Naive thymus-derived CD4-positive, alpha-beta T cell (primary cell): ENCODE measurements at regions of chrX and their contacts with region 1.

Region 1: DNA sequence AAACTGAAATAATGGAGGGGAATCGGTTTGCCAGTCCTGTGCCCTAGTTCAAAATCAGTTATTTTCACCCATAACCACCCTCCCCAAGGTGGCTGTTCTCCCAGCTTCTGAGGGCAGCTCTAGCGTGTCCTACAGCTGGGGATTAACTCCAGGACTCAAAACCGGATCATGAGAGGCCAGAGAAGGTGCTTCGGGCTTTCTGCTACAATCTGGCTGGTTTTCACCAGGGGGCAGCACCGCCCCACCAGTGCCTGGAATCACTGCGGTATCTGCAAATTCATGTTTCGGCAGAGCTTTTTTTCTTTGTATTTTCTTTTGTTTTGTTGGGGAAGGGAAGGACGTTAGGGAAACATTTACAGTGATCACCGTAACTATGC is 28.4 kb downstream of the PDHA1 start:
- DNase-seq: peak; percentile 33 to 66 (median 61)
- ATAC-seq: peak; percentile 89
- H3K4me3 ChIP-seq: peak overlapping the region; percentile 74
- H3K4me3 Mint-ChIP-seq: peak overlapping the region; percentile 78 to 94 (median 88)
- H3K27ac ChIP-seq: no peak overlapping the region
- H3K27ac Mint-ChIP-seq: peak overlapping the region in 8 of 9 donors; percentile 13 to 67 (median 38)
- H3K4me1 ChIP-seq: no peaks in the 10 kb centered on the region
- H3K4me1 Mint-ChIP-seq: peaks cover 4 to 8% (median 8%) of the 10 kb centered on the region in 7 donors
- H3K27me3 ChIP-seq: no peaks in the 10 kb centered on the region
- H3K27me3 Mint-ChIP-seq: no peaks in the 10 kb centered on the region

Region 2: GRCh38 chrX:19462231-19462630 is 90.1 kb after region 1 on chrX:
- CTCF ChIA-PET with region 1: no interaction called
- POLR2A ChIA-PET with region 1: no interaction called
- intact Hi-C with region 1: no loop called
- DNase-seq: no peak
- ATAC-seq: no peak
- H3K4me3 ChIP-seq: no peak overlapping the region
- H3K4me3 Mint-ChIP-seq: no peak overlapping the region
- H3K27ac ChIP-seq: no peak overlapping the region
- H3K27ac Mint-ChIP-seq: no peak overlapping the region
- H3K4me1 ChIP-seq: no peaks in the 10 kb centered on the region
- H3K4me1 Mint-ChIP-seq: peaks cover 0 to 2% (median 0%) of the 10 kb centered on the region in 7 donors
- H3K27me3 ChIP-seq: no peaks in the 10 kb centered on the region
- H3K27me3 Mint-ChIP-seq: peaks cover 0 to 5% (median 0%) of the 10 kb centered on the region in 5 donors

Region 3: DNA sequence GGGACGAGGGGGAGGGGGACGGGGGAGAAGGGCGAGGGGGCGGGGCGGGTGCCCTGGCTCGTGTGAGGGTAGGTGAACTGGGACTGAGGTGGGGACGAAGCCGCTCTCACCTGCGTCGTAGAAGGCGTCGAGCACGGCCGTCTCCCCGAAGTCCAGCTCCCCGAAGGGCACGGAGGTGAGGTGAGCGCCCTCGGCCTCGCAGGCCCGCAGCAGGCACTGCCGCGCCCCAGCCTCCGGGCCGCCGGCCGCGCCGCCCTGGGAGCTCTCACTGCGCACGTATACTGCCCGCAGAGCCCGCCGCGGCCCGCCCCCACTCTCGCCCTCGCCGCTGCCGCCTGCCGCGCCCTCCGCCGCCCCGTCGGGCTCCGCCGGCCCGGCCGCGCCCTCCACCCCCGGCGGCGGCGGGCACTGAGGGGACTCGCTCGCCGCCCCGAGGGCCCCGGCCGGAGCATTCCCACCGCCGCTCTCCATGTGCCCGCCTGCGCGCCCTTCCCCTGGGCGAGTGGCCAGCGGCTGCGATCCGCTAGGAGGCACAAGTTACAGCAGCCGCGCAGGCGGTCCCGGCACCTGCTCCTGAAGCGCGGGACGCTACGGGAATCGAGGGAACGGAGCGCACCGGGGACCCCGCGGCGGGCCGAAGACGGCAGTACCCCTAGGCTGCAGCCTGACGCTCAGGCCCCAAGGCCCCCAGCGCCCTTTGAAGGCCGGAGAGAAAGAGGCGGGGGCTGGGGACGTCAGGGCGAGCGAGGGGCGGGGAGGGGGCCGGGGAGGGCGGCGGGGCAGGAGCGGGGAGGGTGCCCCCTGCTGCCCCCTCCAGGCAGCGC is 142.8 kb after region 1 on chrX and contains the start of gene MAP3K15:
- CTCF ChIA-PET with region 1: no interaction called
- POLR2A ChIA-PET with region 1: no interaction called
- intact Hi-C with region 1: loop called (anchors 1 to 5 kb)
- DNase-seq: peak in 3 of 9 donors; percentile 7 to 33 (median 9)
- ATAC-seq: peak; percentile 57
- H3K4me3 ChIP-seq: no peak within 1 kb of the TSS
- H3K4me3 Mint-ChIP-seq: peak within 1 kb of the TSS; percentile 27 to 72 (median 59)
- H3K27ac ChIP-seq: no peak within 1 kb of the TSS
- H3K27ac Mint-ChIP-seq: no peak within 1 kb of the TSS
- H3K4me1 ChIP-seq: no peaks in the 10 kb centered on the region
- H3K4me1 Mint-ChIP-seq: peaks cover 0 to 7% (median 0%) of the 10 kb centered on the region in 7 donors
- H3K27me3 ChIP-seq: no peaks in the 10 kb centered on the region
- H3K27me3 Mint-ChIP-seq: peaks cover 4 to 37% (median 25%) of the 10 kb centered on the region in 5 donors
- total RNA-seq, gene MAP3K15: 0.10 TPM in 1 of 5 experiments, not detected in the others

Region 4: DNA sequence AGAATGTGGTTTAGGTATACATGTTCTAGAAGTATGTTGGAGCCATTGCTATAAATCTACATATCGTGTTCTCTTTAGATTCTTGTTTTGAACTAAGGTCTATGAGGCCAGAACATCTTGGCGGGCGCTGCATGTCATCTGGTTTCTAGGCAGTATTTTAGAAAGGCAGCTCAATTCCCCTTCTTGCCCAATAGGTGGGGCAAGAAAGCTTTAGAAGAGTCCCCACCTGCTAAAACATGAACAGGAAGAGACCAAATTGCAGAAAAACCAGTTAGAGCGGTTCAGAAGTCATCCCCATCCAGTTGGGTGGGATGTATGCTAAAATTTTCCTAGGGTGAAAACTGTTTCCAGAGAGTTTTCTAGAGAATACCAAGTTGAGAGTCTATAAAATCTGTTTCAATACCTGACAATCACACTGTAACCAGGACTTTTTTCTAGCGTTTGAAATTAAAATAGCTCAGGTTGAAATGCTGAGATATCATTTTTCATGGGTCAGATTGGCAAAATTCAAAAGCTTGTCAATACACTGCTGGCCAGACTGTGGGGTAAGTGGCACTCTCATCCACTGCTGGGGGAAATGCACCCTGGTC is 532.7 kb after region 1 on chrX:
- CTCF ChIA-PET with region 1: interaction called, 3 read pairs
- POLR2A ChIA-PET with region 1: no interaction called
- intact Hi-C with region 1: loop called in 1 of 2 experiments (anchors 1 kb)
- DNase-seq: peak in 6 of 9 donors; percentile 16 to 54 (median 42)
- ATAC-seq: peak; percentile 74
- H3K4me3 ChIP-seq: no peak overlapping the region
- H3K4me3 Mint-ChIP-seq: no peak overlapping the region
- H3K27ac ChIP-seq: no peak overlapping the region
- H3K27ac Mint-ChIP-seq: no peak overlapping the region
- H3K4me1 ChIP-seq: no peaks in the 10 kb centered on the region
- H3K4me1 Mint-ChIP-seq: peaks cover 0 to 17% (median 6%) of the 10 kb centered on the region in 7 donors
- H3K27me3 ChIP-seq: no peaks in the 10 kb centered on the region
- H3K27me3 Mint-ChIP-seq: no peaks in the 10 kb centered on the region

Region 5: DNA sequence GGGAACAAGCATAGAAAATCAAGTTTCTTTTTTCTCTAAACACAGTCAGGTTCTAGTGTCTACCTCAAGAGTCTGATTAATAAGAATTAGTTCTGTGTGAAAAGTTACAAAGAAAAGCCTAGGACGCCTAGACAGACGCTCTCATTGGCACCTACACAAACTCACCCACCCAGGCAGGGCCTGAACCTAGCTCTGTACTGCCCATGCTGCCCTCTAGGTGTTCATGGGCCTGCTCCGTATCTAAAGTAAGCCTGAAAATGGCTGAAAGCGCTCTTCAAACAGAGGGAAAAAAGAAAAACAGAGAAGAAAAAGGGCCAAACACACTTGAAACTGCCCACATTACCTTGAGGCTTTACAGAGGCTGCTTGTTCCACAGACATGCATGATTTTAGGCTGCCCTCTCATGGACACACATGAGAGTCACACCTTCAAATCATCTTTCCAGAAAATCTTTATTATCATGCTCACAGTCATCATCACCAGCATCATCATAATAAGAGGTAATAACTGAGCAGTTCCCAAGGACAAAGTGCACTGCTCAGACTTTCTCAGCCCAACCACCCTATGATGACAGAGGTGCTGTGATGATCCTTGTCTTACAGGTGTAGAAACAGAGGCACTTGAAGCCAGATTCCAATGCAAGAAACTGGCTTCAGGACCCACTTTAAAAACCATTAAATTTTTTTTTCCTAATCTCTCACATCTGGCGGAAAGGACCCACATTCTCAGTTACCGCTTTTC is 695.0 kb after region 1 on chrX:
- CTCF ChIA-PET with region 1: interaction called, 5 read pairs
- POLR2A ChIA-PET with region 1: no interaction called
- intact Hi-C with region 1: loop called (anchors 1 kb)
- DNase-seq: peak in 6 of 9 donors; percentile 8 to 40 (median 28)
- ATAC-seq: peak; percentile 69
- H3K4me3 ChIP-seq: no peak overlapping the region
- H3K4me3 Mint-ChIP-seq: no peak overlapping the region
- H3K27ac ChIP-seq: no peak overlapping the region
- H3K27ac Mint-ChIP-seq: peak overlapping the region in 1 of 9 donors; percentile 62
- H3K4me1 ChIP-seq: no peaks in the 10 kb centered on the region
- H3K4me1 Mint-ChIP-seq: peaks cover 0 to 3% (median 0%) of the 10 kb centered on the region in 7 donors
- H3K27me3 ChIP-seq: no peaks in the 10 kb centered on the region
- H3K27me3 Mint-ChIP-seq: no peaks in the 10 kb centered on the region

Region 6: DNA sequence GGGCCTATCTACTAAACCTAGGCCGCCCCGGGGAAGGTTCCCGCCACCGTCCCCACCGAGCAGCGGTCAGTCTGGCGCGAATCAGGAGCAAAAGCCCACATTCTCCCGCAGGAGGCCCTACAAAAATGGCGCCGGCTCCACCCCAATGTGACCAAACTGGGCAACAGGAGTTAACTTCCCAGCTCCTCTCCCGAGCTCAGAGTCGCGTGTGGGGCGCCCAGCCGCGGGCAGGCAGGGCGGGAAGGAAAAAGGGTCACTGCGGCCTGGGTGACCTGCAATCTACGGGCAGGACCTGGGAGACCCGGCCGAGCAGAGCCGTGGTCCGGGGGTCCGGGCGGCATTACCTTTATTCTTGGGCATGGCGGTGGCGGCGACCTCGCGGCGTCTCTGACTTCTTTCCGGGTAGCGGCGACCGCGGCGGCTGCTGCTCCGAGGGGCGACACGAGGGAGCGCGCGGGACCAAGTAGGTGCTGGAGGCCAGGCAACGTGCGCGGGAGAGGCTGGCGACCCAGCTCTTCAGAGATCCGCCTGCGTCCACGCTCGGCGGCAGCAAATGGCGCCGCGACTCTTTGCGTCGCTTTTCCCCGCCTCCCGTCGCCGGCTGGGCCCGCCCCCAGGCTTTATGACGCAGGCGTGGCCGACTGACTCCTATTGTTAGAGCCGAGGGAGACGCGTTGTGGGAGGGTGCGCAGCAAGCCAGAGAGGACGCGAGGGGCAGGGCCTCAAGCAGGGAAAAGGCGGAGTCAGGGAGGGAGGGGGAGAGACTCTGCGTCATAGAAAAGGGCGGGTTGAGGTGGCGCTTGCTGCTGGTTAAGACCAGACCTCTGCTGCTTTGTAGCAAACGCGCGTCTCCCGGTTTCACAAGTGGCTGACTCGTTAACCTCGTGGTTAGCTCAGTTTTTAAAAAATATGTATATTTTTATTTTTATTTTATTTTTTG is 769.4 kb after region 1 on chrX and contains the start of gene EIF1AX:
- CTCF ChIA-PET with region 1: no interaction called
- POLR2A ChIA-PET with region 1: no interaction called
- intact Hi-C with region 1: loop called in 1 of 2 experiments (anchors 5 kb)
- DNase-seq: peak; percentile 82 to 100 (median 98)
- ATAC-seq: peak; percentile 99
- H3K4me3 ChIP-seq: peak within 1 kb of the TSS; percentile 84
- H3K4me3 Mint-ChIP-seq: peak within 1 kb of the TSS; percentile 80 to 96 (median 88)
- H3K27ac ChIP-seq: peak within 1 kb of the TSS; percentile 93
- H3K27ac Mint-ChIP-seq: peak within 1 kb of the TSS; percentile 68 to 97 (median 89)
- H3K4me1 ChIP-seq: peaks cover 8 to 13% of the 10 kb centered on the region in 2 donors
- H3K4me1 Mint-ChIP-seq: peaks cover 4 to 42% (median 27%) of the 10 kb centered on the region in 7 donors
- H3K27me3 ChIP-seq: no peaks in the 10 kb centered on the region
- H3K27me3 Mint-ChIP-seq: no peaks in the 10 kb centered on the region
- total RNA-seq, gene EIF1AX: 40.2 to 67.5 (median 51.6) TPM